CD4-positive, alpha-beta memory T cell (primary cell): ENCODE measurements at regions of chr5 and their contacts with region 1.

Region 1: DNA sequence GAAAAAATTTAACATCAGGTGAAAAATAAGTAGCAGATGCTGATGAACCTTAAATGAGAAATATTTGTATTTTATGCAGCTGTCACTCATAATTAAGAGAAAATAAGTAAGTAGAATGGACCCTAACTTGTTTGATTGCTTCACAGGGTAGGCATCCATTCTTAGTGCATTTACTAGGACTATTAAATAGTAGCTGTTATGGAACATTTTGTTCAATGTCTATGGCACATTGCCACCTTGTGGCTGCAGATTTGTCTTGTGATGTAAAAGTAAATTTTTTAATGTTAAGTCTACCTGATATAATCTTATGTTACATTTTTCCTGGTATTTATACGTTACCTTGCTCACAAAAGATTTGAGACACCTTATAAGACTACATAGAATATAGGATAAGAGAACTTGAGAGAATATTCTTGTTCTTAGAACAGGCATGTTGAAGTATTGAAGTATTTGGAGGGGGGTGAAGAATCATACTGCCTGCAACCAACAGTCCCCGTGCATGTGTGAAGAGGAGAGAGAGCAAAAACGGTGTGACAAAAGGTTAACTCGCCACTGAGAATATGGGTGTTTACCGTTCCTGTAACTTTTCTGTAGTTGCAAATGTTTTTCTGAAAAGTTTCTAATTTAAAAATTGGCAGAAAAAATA is 161.1 kb downstream of the MAST4 start:
- DNase-seq: peak in 4 of 5 donors; percentile 4 to 14 (median 10)
- H3K4me3 ChIP-seq: no peak overlapping the region
- H3K4me3 Mint-ChIP-seq: no peak overlapping the region
- H3K27ac ChIP-seq: no peak overlapping the region
- H3K27ac Mint-ChIP-seq: no peak overlapping the region
- H3K4me1 ChIP-seq: no peaks in the 10 kb centered on the region
- H3K4me1 Mint-ChIP-seq: no peaks in the 10 kb centered on the region
- H3K27me3 ChIP-seq: no peaks in the 10 kb centered on the region
- H3K27me3 Mint-ChIP-seq: peaks cover 5 to 12% of the 10 kb centered on the region in 2 donors

Region 2: GRCh38 chr5:65076251-65076869 is 1681.0 kb before region 1 on chr5:
- CTCF ChIA-PET with region 1: no interaction called
- POLR2A ChIA-PET with region 1: no interaction called
- intact Hi-C with region 1: loop called (anchors 5 kb)
- DNase-seq: peak; percentile 46 to 63 (median 53)
- H3K4me3 ChIP-seq: no peak overlapping the region
- H3K4me3 Mint-ChIP-seq: no peak overlapping the region
- H3K27ac ChIP-seq: no peak overlapping the region
- H3K27ac Mint-ChIP-seq: peak overlapping the region in 1 of 7 donors; percentile 43
- H3K4me1 ChIP-seq: no peaks in the 10 kb centered on the region
- H3K4me1 Mint-ChIP-seq: peaks cover 0 to 5% (median 5%) of the 10 kb centered on the region in 4 donors
- H3K27me3 ChIP-seq: no peaks in the 10 kb centered on the region
- H3K27me3 Mint-ChIP-seq: peaks cover 2 to 7% of the 10 kb centered on the region in 2 donors

Region 3: GRCh38 chr5:66582499-66583165 is 174.7 kb before region 1 on chr5:
- CTCF ChIA-PET with region 1: no interaction called
- POLR2A ChIA-PET with region 1: no interaction called
- intact Hi-C with region 1: no loop called
- DNase-seq: no peak
- H3K4me3 ChIP-seq: no peak overlapping the region
- H3K4me3 Mint-ChIP-seq: no peak overlapping the region
- H3K27ac ChIP-seq: no peak overlapping the region
- H3K27ac Mint-ChIP-seq: no peak overlapping the region
- H3K4me1 ChIP-seq: no peaks in the 10 kb centered on the region
- H3K4me1 Mint-ChIP-seq: no peaks in the 10 kb centered on the region
- H3K27me3 ChIP-seq: no peaks in the 10 kb centered on the region
- H3K27me3 Mint-ChIP-seq: peaks cover 5 to 6% of the 10 kb centered on the region in 2 donors

Region 4: GRCh38 chr5:66769839-66770617 is 12.7 kb after region 1 on chr5:
- CTCF ChIA-PET with region 1: no interaction called
- POLR2A ChIA-PET with region 1: no interaction called
- intact Hi-C with region 1: no loop called
- DNase-seq: no peak
- H3K4me3 ChIP-seq: no peak overlapping the region
- H3K4me3 Mint-ChIP-seq: no peak overlapping the region
- H3K27ac ChIP-seq: no peak overlapping the region
- H3K27ac Mint-ChIP-seq: no peak overlapping the region
- H3K4me1 ChIP-seq: no peaks in the 10 kb centered on the region
- H3K4me1 Mint-ChIP-seq: no peaks in the 10 kb centered on the region
- H3K27me3 ChIP-seq: no peaks in the 10 kb centered on the region
- H3K27me3 Mint-ChIP-seq: peaks cover 2 to 8% of the 10 kb centered on the region in 2 donors